Activated naive CD4-positive, alpha-beta T cell treated with anti-CD3 and anti-CD28 coated beads for 36 hours (primary cell): ENCODE measurements at regions of chr1 and their contacts with region 1.

Region 1: DNA sequence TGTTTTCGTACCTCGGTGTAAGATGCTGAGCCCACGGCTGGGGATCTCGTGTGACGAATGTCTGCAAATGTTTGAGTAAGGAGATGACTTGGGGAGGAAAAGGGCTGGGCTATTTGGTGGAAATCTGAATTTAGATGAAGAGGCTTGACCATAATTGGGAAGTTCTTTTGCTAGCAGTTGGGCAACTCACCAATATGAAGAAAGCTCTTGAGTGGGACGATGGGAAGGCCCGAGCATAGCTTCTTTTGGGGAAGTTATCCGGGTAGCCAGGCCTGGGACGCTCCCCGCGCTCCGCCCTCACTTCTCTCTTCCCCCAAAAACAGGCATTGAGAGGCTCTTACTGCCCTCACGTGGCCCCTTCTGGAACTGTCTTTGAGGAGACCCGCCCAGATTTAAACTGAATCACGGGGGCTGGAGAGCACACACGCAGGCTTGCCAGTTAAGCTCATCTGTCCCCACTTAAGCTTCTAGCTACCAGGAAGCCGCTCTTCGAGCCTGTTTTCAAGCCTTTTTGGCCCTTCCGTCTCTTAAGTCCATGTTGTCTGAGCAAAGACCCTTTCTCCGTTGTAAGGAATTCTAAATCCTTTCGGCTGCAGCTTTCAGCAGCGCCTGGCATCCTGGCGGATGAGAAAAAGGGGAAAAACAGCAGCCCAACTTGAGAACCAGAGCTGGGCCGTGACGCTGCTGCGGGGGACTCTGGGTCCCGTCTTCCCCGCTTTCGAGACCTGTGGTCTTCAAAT is 93.1 kb downstream of the NID1 start:
- DNase-seq: peak; percentile 94
- H3K4me3 Mint-ChIP-seq: peak overlapping the region; percentile 67
- H3K27ac Mint-ChIP-seq: peak overlapping the region; percentile 76
- H3K4me1 Mint-ChIP-seq: peaks cover 14% of the 10 kb centered on the region
- H3K27me3 Mint-ChIP-seq: no peaks in the 10 kb centered on the region

Region 2: DNA sequence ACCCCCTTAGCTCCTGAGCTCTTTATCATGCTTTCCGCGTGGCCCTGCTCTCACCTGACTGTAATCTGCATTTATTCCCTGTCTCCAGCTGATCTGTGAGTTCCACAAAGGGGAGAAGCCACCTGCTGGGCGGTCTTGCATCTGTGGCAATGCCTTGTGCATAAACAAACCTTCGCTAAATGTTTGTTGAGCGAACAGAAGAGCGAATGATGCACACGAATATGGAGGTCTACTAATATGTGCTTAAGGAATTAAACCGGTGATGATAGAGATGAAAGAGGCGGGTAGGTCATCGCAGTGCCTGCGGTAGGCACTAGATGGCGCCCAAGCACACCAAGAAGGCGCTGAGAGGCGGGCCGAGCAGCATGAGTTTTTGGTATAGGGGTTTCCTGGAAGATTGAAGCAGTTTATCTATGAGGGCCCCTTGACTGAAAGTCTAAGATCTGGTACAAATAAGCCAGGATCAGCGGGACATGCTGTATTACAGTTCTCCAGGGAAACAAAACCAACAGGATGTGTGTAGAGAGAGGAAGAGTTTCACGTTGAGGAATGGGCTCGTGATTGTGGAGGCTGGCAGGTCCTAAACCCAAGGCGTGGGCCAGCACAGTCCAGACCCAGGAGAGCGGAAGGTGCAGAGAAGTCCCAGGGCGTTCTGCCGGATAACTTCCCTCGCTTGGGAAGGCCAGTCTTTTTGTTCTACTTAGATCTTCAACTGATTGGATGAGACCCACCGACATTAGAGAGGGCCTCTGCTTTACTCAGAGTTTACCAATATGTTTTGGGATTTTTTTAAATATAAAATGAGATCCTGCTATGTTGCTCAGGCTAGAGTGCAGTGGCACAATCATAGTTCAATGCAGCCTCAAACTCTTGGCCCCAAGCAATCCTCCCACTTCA is 877.8 kb before region 1 on chr1:
- CTCF ChIA-PET with region 1: no interaction called
- intact Hi-C with region 1: loop called (anchors 5 kb)
- DNase-seq: peak; percentile 92
- H3K4me3 Mint-ChIP-seq: no peak overlapping the region
- H3K27ac Mint-ChIP-seq: no peak overlapping the region
- H3K4me1 Mint-ChIP-seq: peaks cover 7% of the 10 kb centered on the region
- H3K27me3 Mint-ChIP-seq: peaks cover 2% of the 10 kb centered on the region

Region 3: GRCh38 chr1:235614442-235614954 is 357.2 kb before region 1 on chr1:
- CTCF ChIA-PET with region 1: no interaction called
- intact Hi-C with region 1: no loop called
- DNase-seq: no peak
- H3K4me3 Mint-ChIP-seq: no peak overlapping the region
- H3K27ac Mint-ChIP-seq: no peak overlapping the region
- H3K4me1 Mint-ChIP-seq: no peaks in the 10 kb centered on the region
- H3K27me3 Mint-ChIP-seq: no peaks in the 10 kb centered on the region

Region 4: DNA sequence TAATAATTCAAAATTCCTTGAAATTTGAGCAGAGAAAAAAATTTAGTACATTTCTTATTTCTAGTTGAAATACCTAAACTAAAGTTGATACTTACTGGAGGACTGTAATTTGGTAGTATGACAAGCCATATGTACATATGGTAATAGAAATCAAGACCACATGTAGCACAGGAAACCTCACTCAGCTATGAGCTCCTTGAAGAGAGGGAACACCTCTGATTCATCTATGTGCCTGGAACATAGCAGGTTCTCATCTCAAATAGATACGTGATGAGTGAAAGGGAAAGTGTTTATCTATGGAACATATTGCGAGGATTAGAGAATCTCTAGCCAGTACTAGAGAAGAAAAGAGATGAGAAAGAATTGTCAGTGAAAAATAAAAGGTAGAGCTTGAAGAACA is 274.2 kb before region 1 on chr1:
- CTCF ChIA-PET with region 1: no interaction called
- intact Hi-C with region 1: loop called (anchors 1 kb)
- DNase-seq: peak; percentile 37
- H3K4me3 Mint-ChIP-seq: no peak overlapping the region
- H3K27ac Mint-ChIP-seq: peak overlapping the region; percentile 82
- H3K4me1 Mint-ChIP-seq: peaks cover 18% of the 10 kb centered on the region
- H3K27me3 Mint-ChIP-seq: no peaks in the 10 kb centered on the region

Region 5: GRCh38 chr1:235843461-235843961 is 128.2 kb before region 1 on chr1:
- CTCF ChIA-PET with region 1: interaction called, 30 read pairs
- intact Hi-C with region 1: loop called (anchors 2 kb)
- DNase-seq: no peak
- H3K4me3 Mint-ChIP-seq: no peak overlapping the region
- H3K27ac Mint-ChIP-seq: no peak overlapping the region
- H3K4me1 Mint-ChIP-seq: peaks cover 48% of the 10 kb centered on the region
- H3K27me3 Mint-ChIP-seq: no peaks in the 10 kb centered on the region

Region 6: DNA sequence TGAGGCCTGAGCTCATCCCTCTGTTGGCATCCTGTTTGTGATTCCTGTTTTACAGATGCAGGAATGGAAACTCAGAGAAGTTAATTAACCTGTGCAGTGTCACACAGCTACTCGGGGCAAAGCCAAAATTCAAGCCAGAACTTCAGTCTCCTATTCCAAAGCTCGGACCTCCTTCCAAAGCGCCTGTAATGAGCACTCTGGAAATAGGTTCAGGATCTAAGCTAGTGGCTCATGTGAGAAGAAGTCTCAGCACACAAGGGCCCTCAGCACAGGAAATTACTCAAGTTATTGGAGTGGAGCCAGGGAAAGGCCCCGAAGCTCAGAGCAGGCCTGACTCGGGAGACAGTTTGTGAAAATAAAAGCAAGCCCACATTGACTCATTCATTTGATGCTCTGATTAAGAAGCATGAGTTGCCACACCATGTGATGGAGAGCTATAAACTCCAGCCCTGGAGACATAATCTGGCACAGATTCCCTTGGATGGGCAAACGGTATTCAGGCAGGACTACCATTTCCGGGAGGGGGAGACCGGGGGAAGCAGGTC is 54.4 kb before region 1 on chr1:
- CTCF ChIA-PET with region 1: interaction called, 7 read pairs
- intact Hi-C with region 1: loop called (anchors 5 kb)
- DNase-seq: peak; percentile 88
- H3K4me3 Mint-ChIP-seq: no peak overlapping the region
- H3K27ac Mint-ChIP-seq: peak overlapping the region; percentile 82
- H3K4me1 Mint-ChIP-seq: peaks cover 29% of the 10 kb centered on the region
- H3K27me3 Mint-ChIP-seq: no peaks in the 10 kb centered on the region

Region 7: GRCh38 chr1:235984041-235984825 is 12.5 kb after region 1 on chr1:
- CTCF ChIA-PET with region 1: interaction called, 10 read pairs
- intact Hi-C with region 1: no loop called
- DNase-seq: no peak
- H3K4me3 Mint-ChIP-seq: no peak overlapping the region
- H3K27ac Mint-ChIP-seq: no peak overlapping the region
- H3K4me1 Mint-ChIP-seq: no peaks in the 10 kb centered on the region
- H3K27me3 Mint-ChIP-seq: no peaks in the 10 kb centered on the region